GM10248 (cell line): ENCODE measurements at regions of chr1 and their contacts with region 1.

Region 1: DNA sequence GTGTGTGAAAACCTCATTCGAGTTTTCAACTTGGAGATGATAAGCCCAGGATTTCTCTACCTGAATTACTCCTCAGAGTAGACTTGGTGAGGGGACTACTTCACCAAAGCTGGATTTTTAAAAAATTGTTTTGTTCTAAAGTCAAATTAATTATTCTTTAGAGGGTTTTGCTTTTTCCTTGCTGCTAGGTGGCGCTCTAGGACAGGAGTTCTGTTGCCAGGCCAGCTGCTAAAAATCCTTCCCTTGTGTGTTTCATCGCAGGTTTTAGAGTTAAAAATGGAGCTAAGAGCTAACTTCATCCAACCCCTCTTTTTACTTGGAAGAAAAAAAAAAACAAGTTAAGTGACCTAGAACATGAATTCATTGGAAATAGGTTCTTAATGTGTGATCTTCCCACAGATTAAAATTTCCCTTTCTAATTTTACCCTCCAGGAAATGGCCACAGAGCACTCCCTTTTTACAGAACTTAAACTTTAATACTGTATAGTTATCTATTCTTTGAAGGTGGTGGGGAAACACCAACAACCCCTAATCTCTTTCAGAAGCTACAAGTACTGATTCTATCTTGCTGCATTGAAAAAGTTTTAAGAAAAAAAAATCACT is 36.7 kb upstream of the FAM163A start:
- DNase-seq: peak; percentile 51
- CTCF ChIP-seq: peak; percentile 70

Region 2: DNA sequence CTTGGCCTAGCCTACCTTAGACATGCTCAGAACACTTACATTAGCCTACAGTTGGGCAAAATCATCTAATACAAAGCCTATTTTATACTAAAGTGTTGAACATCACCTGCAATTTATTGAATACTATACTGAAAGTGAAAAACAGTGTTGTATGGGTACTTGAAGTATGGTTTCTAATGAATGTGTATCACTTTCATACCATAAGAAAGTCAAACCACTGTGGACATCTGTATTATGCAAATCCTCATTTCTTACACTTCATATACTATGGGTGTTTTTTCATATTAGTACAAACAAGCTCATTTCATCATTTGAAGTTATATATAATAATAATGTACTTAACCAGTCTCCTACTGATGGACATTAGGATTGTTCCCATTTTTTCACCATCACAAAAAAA is 73.6 kb before region 1 on chr1:
- CTCF ChIA-PET with region 1: no interaction called
- POLR2A ChIA-PET with region 1: no interaction called
- DNase-seq: no peak
- CTCF ChIP-seq: no peak

Region 3: GRCh38 chr1:179728271-179728670 is 21.8 kb after region 1 on chr1:
- CTCF ChIA-PET with region 1: interaction called, 13 read pairs
- POLR2A ChIA-PET with region 1: no interaction called
- DNase-seq: no peak
- CTCF ChIP-seq: no peak

Region 4: GRCh38 chr1:180188091-180188506 is 481.7 kb after region 1 on chr1:
- CTCF ChIA-PET with region 1: interaction called, 10 read pairs
- POLR2A ChIA-PET with region 1: no interaction called
- DNase-seq: peak; percentile 54
- CTCF ChIP-seq: peak; percentile 54